ENCODE measurements at regions of chr18 and their contacts with region 1.

Region 1: DNA sequence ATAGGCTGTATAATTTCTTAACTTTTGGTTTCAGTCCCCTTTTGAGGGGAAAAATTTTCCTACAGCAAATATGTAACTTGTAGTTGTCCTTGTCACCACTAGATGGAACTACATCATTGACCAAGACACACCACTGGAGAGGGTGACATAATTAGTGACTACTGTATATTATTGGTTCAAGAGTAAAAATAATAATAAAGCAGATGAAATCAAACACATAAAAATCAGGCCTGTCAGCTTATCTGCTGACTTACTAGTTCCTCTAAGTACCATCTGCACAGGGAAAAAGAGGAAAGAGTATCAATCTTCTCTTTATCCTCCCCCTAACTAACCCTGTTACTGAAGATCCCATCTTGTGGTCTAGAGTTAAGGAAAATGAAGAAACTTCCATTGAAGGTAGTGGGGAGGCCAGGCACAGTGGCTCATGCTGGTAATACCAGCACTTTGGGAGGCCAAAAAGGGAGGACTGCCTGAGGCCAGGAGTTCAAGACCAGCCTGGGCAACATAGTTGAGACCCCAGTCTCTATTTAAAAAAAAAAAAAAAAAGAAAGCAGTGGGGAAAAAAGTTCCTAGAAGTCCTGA is 29.6 kb upstream of the ENOSF1 start:
- DNase-seq: no peak
- H3K4me3 ChIP-seq: no peak overlapping the region
- H3K27ac ChIP-seq: no peak overlapping the region
- H3K4me1 ChIP-seq: no peaks in the 10 kb centered on the region
- H3K27me3 ChIP-seq: no peaks in the 10 kb centered on the region
- CTCF ChIP-seq: peak; percentile 72 to 76 (median 74)
- POLR2A ChIP-seq: no peak

Region 2: GRCh38 chr18:577643-578375 is 164.2 kb before region 1 on chr18:
- intact Hi-C with region 1: no loop called
- DNase-seq: no peak
- H3K4me3 ChIP-seq: no peak overlapping the region
- H3K27ac ChIP-seq: no peak overlapping the region
- H3K4me1 ChIP-seq: no peaks in the 10 kb centered on the region
- H3K27me3 ChIP-seq: no peaks in the 10 kb centered on the region
- CTCF ChIP-seq: no peak
- POLR2A ChIP-seq: no peak

Region 3: GRCh38 chr18:839224-840022 is 97.4 kb after region 1 on chr18:
- intact Hi-C with region 1: loop called (anchors 10 kb)
- DNase-seq: peak; percentile 96
- H3K4me3 ChIP-seq: peak overlapping the region; percentile 9 to 26
- H3K27ac ChIP-seq: peak overlapping the region; percentile 26 to 40
- H3K4me1 ChIP-seq: peaks cover 8% of the 10 kb centered on the region
- H3K27me3 ChIP-seq: no peaks in the 10 kb centered on the region
- CTCF ChIP-seq: peak; percentile 91 to 98 (median 97)
- POLR2A ChIP-seq: no peak